ENCODE measurements at regions of chr15 and their contacts with region 1.

Region 1: GRCh38 chr15:68559345-68560310 is 19.2 kb upstream of the CORO2B start:
- ATAC-seq: peak; percentile 87 to 98 (median 90)
- H3K4me3 ChIP-seq: peak overlapping the region; percentile 19 to 34 (median 28)
- H3K27ac ChIP-seq: peak overlapping the region in 1 of 2 donors; percentile 47
- H3K4me1 ChIP-seq: peaks cover 22 to 28% of the 10 kb centered on the region in 2 donors

Region 2: GRCh38 chr15:68650901-68651709 is 91.5 kb after region 1 on chr15:
- in situ Hi-C with region 1: loop called in 3 of 9 experiments (anchors 25 kb)
- ATAC-seq: peak in 3 of 8 experiments; percentile 22 to 58 (median 24)
- H3K4me3 ChIP-seq: no peak overlapping the region
- H3K27ac ChIP-seq: no peak overlapping the region
- H3K4me1 ChIP-seq: peaks cover 34 to 45% of the 10 kb centered on the region in 2 donors

Region 3: DNA sequence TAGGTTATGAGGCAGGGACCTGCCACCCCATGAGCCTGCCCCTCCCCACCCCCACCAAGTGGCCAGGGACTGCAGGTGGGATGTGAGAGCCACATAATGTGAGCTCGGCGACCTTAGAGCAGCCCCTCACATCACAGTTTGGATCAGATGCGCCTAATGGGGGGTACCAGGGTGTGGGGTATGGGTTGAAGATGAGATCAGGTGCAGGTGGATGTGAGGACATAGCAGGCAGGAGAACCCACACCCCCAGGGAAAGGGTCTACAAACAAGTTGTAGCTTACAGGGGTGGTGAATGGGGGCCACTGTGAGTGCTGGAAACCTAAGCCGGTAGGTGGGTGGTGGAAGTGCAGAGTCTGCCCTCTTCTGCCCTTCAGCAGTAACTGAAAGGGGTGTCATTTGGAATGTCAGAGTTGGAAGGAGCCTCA is 113.2 kb after region 1 on chr15:
- in situ Hi-C with region 1: loop called (anchors 10 to 25 kb)
- ATAC-seq: peak in 5 of 8 experiments; percentile 25 to 53 (median 47)
- H3K4me3 ChIP-seq: no peak overlapping the region
- H3K27ac ChIP-seq: no peak overlapping the region
- H3K4me1 ChIP-seq: peaks cover 2 to 5% of the 10 kb centered on the region in 2 donors

Region 4: GRCh38 chr15:68795298-68795848 is 235.7 kb after region 1 on chr15:
- in situ Hi-C with region 1: no loop called
- ATAC-seq: peak; percentile 98 to 99 (median 98)
- H3K4me3 ChIP-seq: peak overlapping the region; percentile 2 to 24 (median 14)
- H3K27ac ChIP-seq: peak overlapping the region; percentile 87 to 88
- H3K4me1 ChIP-seq: peaks cover 60 to 83% of the 10 kb centered on the region in 2 donors

Region 5: DNA sequence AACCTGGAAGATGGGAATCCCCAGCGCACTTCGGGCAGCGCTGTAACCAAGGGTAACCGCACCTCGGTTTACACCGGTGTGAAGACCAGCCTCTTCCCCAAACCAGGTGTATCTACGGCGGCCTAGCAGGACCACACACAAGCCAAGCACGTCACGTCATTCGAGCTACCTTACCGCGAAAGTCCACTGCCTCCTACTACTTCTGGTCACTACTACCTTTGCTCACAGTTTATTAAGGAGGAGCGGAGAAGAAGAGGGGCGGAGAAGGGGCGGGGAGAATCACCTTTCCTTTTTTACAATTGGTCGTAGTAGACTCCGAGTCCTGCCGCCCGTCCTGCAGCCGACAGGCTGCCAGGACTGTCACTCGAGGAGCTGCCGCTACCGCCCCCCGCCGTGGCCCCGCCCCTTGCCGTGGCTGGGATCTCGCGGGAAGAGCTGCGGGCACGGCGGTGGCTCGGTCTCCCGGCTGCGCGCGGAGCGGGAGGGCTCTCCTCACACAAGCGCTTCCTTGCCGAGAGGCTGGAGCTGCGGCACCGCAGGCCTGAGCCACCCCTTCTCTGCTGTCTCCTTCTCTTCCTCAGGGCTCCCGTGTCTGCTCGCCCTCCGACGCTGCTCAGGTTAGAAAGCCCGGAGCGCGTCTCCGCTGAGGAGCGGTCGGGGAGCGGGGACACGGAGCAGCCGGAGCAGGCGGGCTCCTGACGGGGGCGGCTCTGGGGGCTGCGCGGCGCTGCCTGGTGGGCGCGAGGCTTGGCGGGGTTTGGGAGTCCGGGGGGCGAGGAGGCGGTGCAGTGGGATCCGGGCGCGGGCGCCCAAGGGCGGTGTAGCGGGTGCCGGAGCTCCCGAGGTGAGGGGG is 600.7 kb after region 1 on chr15 and contains the start of gene GLCE:
- in situ Hi-C with region 1: no loop called
- ATAC-seq: peak; percentile 93 to 96 (median 94)
- H3K4me3 ChIP-seq: peak within 1 kb of the TSS; percentile 74 to 93 (median 80)
- H3K27ac ChIP-seq: peak within 1 kb of the TSS; percentile 84
- H3K4me1 ChIP-seq: peaks cover 9 to 33% of the 10 kb centered on the region in 2 donors
- total RNA-seq, gene GLCE: 12.7 to 39.3 (median 20.3) TPM